ENCODE measurements at regions of chr14 and their contacts with region 1.

Region 1: DNA sequence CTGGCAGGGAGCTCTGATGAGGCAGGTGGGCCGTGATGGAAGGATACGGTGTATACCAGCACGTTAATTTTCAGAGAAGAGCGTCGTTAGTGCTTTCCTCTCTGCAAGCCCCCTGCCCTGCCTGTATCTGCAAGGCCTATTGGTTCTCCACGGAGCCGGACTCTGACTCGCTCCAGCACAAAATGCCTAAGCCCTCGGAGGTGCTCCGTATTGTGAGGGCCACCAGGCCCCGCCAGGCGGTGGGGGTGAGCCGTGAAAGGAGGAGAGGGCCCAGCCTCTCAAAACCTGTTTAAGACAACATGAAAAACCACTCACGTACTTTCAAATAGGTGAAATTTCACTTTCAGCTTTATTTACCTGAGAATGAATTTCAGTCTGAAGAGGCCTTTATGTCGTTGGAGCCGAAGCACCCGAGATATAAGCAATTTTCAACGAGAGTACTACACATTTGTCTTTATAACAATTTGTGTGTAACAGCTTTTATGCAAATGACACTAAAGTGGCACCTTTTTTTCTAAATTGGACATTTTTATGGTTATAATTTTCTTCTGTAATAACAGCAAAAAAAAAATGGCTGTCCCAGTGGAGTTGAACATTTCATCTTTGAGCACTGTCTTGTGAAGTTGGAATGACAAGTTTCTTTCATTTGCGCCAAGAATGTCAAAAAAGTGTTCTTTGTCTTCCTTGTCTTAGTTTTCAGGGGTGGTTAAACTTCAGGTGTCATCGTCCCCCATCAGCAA is 749.5 kb downstream of the VRK1 start:
- DNase-seq: no peak

Region 2: GRCh38 chr14:95869776-95870175 is 1676.9 kb before region 1 on chr14:
- intact Hi-C with region 1: loop called in 1 of 2 experiments (anchors 5 kb)
- DNase-seq: no peak

Region 3: GRCh38 chr14:98692857-98693256 is 1146.2 kb after region 1 on chr14:
- intact Hi-C with region 1: no loop called
- DNase-seq: no peak

Measured in posterior vena cava (tissue), 2 donors.